ENCODE measurements at regions of chr5 and their contacts with region 1.

Region 1: DNA sequence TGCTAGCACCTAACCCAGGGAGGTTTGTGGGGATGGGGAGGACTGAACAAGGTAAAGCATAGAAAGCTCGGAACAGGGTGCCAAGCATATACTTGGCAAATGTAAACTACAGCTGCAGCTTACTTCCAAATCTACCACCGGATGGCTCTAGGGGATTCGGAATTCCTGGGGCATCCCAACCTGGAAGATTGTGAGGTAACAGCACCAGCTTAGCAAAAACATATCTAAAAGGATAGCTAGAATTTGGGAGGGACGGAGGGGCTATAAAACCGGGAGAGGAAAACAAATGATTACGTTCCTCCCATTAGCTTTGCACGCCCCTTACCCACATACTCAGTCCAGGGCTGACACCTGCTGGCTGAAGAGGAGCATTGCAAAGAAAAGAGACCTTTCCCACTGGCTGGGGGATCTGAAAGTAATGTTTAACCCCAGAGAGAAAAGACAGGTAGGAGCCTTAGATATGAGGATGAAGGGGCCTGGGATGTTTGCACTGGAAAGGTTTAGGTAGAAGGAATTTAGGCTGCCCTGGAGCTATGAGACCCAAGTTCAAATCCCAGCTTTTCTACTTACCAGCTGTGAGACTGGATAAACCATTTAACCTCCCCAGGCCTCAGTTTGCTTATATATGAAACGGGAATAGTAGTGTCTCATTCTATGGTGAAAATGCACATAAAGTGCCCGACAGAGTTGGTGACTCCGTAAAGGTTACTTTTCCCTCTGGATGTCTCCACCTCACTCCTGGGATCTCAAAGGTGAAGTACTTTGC is 73.6 kb downstream of the FAM114A2 start:
- DNase-seq: peak; percentile 16
- H3K4me3 ChIP-seq: no peak overlapping the region
- H3K27ac ChIP-seq: no peak overlapping the region
- H3K4me1 ChIP-seq: no peaks in the 10 kb centered on the region
- H3K27me3 ChIP-seq: peaks cover 3% of the 10 kb centered on the region
- CTCF ChIP-seq: peak; percentile 67 to 79 (median 72)
- EP300 ChIP-seq: no peak
- POLR2A ChIP-seq: no peak

Region 2: GRCh38 chr5:152527358-152528052 is 1437.6 kb before region 1 on chr5:
- in situ Hi-C with region 1: loop called (anchors 10 to 25 kb)
- intact Hi-C with region 1: loop called (anchors 5 kb)
- DNase-seq: no peak
- H3K4me3 ChIP-seq: no peak overlapping the region
- H3K27ac ChIP-seq: no peak overlapping the region
- H3K4me1 ChIP-seq: peaks cover 0 to 9% (median 0%) of the 10 kb centered on the region in 4 donors
- H3K27me3 ChIP-seq: no peaks in the 10 kb centered on the region
- CTCF ChIP-seq: no peak
- EP300 ChIP-seq: no peak
- POLR2A ChIP-seq: no peak

Region 3: DNA sequence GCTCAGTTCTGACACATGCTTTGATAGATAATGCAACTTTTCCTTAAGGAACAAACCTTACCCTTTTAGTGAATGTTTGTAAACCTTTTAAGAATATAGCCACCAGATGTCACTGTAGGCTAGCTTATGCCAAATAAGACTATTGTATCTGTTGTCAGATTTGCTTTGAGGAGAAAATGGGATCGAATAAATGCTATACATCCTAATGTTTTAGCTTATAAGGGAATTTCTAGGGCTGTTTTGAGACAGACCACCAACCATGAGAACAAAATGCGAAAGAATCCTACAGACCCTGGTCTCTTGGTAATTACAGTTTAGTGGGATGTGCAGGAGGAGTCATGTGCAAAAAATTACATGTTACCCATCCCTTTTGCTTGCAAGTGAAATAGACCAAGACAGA is 1432.3 kb before region 1 on chr5:
- in situ Hi-C with region 1: loop called (anchors 10 to 25 kb)
- intact Hi-C with region 1: loop called (anchors 5 kb)
- DNase-seq: no peak
- H3K4me3 ChIP-seq: no peak overlapping the region
- H3K27ac ChIP-seq: no peak overlapping the region
- H3K4me1 ChIP-seq: peaks cover 0 to 2% (median 0%) of the 10 kb centered on the region in 4 donors
- H3K27me3 ChIP-seq: no peaks in the 10 kb centered on the region
- CTCF ChIP-seq: peak; percentile 40 to 49 (median 49)
- EP300 ChIP-seq: no peak
- POLR2A ChIP-seq: no peak

Region 4: DNA sequence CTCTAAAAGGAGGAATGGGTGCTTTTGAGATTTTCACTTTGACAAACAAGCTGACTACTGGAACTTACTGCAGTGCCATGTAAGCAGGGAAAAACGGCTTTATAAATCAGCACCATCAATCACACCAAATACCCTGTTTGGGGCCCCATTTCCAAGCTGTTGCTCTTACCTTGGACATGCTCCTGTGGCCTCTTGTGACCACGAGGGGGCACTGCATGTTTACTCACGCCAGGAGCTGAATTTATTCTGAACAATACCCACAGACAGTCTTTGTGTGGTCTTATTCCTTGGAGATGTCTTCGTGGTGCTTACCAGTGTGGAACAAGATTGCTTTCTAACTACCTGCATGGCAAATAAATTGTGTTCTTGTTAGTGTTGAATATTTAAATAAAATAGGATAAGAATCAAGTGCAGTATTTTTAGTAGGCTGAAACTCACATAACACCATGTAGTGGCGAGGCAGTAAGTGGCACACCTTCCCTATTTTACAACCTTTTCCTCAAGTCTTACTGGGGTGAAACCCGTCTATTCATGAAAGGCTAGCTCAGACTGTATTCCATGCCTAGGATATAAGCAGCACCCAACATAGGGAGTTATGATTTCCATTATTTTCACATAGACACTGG is 1404.4 kb before region 1 on chr5:
- in situ Hi-C with region 1: loop called in 1 of 4 experiments (anchors 10 kb)
- intact Hi-C with region 1: no loop called
- DNase-seq: peak; percentile 46
- H3K4me3 ChIP-seq: no peak overlapping the region
- H3K27ac ChIP-seq: no peak overlapping the region
- H3K4me1 ChIP-seq: no peaks in the 10 kb centered on the region
- H3K27me3 ChIP-seq: no peaks in the 10 kb centered on the region
- CTCF ChIP-seq: peak; percentile 52 to 62 (median 58)
- EP300 ChIP-seq: no peak
- POLR2A ChIP-seq: no peak

Region 5: DNA sequence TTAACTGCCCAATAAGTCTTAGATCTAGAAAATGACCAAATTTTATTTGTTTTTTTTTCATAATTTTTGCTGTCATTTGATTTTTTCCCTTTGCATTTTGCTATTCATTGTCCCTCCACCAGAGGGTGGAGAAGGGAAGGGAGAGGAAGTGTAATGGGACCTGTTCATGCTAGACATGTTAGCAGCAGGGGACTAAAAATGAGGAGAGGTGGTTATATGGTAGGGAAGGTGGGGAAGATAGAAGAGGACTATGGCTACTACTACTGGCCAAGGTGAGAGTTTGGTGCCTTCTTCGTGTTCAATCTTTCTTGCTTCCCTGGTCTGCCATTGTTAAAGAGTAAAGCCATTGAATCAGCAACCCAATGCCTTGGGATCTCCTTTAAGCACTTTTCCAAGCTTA is 468.2 kb before region 1 on chr5:
- in situ Hi-C with region 1: loop called in 2 of 4 experiments (anchors 25 kb)
- intact Hi-C with region 1: no loop called
- DNase-seq: no peak
- H3K4me3 ChIP-seq: no peak overlapping the region
- H3K27ac ChIP-seq: no peak overlapping the region
- H3K4me1 ChIP-seq: no peaks in the 10 kb centered on the region
- H3K27me3 ChIP-seq: peaks cover 5% of the 10 kb centered on the region
- CTCF ChIP-seq: peak in 4 of 5 experiments; percentile 14 to 40 (median 35)
- EP300 ChIP-seq: no peak
- POLR2A ChIP-seq: no peak

Region 6: GRCh38 chr5:153523831-153524230 is 441.2 kb before region 1 on chr5:
- in situ Hi-C with region 1: loop called in 1 of 4 experiments (anchors 25 kb)
- intact Hi-C with region 1: no loop called
- DNase-seq: no peak
- H3K4me3 ChIP-seq: no peak overlapping the region
- H3K27ac ChIP-seq: no peak overlapping the region
- H3K4me1 ChIP-seq: no peaks in the 10 kb centered on the region
- H3K27me3 ChIP-seq: no peaks in the 10 kb centered on the region
- CTCF ChIP-seq: no peak
- EP300 ChIP-seq: no peak
- POLR2A ChIP-seq: no peak

Region 7: GRCh38 chr5:154138701-154139100 is 173.6 kb after region 1 on chr5:
- in situ Hi-C with region 1: no loop called
- intact Hi-C with region 1: no loop called
- DNase-seq: no peak
- H3K4me3 ChIP-seq: no peak overlapping the region
- H3K27ac ChIP-seq: no peak overlapping the region
- H3K4me1 ChIP-seq: no peaks in the 10 kb centered on the region
- H3K27me3 ChIP-seq: no peaks in the 10 kb centered on the region
- CTCF ChIP-seq: no peak
- EP300 ChIP-seq: no peak
- POLR2A ChIP-seq: no peak

Region 8: DNA sequence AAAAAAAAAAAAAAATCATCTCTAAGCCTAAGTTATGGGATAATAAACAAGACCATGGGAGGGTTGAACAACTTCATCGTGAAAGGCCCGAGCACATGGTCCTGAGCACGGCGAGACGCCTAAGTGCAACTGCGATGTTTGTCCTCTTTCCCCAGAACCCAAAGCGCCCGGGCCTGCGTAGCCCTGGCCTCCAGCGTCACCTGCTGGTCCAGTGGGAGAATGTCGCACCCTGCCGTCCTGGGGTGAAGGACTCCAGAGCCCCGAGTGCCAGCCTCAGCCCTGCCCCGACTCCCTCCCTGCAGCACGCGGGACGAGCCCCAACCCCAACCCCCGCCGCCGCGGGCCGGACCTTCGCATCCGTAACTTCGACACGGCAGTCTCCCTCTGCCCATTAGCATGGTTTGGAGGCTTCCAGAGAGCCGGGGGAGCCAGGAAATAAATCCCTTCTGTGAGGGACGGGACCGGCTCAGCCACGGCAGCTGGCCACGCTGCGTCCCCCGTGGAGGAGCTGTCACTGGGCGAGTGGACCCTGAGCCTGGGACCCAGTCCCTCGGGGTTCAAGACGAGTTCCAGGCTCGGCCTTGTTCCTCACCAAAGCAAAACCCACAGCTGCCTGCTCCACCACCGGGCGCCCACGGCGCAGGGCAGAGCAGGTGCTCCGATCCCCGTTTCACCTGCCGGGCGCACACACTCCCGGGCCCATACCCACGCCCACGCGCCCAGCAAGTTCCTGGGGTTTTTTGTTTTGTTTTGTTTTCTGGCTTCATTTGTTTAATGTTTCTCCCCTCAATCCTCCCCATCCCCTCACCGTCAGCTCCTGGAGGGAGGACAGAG is 645.5 kb after region 1 on chr5:
- in situ Hi-C with region 1: loop called in 2 of 4 experiments (anchors 25 kb)
- intact Hi-C with region 1: no loop called
- DNase-seq: peak; percentile 75
- H3K4me3 ChIP-seq: peak overlapping the region in 3 of 4 donors; percentile 0 to 38 (median 32)
- H3K27ac ChIP-seq: no peak overlapping the region
- H3K4me1 ChIP-seq: peaks cover 9 to 17% (median 14%) of the 10 kb centered on the region in 4 donors
- H3K27me3 ChIP-seq: peaks cover 69% of the 10 kb centered on the region
- CTCF ChIP-seq: peak; percentile 78 to 87 (median 84)
- EP300 ChIP-seq: no peak
- POLR2A ChIP-seq: no peak

Measured in transverse colon (tissue), 4 donors.